AG04450 (cell line): ENCODE measurements at regions of chr18 and their contacts with region 1.

Region 1: GRCh38 chr18:35616074-35616473 is 34.5 kb downstream of the GALNT1 start:
- DNase-seq: no peak
- H3K4me3 ChIP-seq: no peak overlapping the region
- H3K27ac ChIP-seq: no peak overlapping the region
- H3K27me3 ChIP-seq: no peaks in the 10 kb centered on the region
- CTCF ChIP-seq: no peak

Region 2: GRCh38 chr18:35602193-35602820 is 13.8 kb before region 1 on chr18:
- CTCF ChIA-PET with region 1: interaction called, 12 read pairs
- POLR2A ChIA-PET with region 1: no interaction called
- DNase-seq: no peak
- H3K4me3 ChIP-seq: no peak overlapping the region
- H3K27ac ChIP-seq: no peak overlapping the region
- H3K27me3 ChIP-seq: no peaks in the 10 kb centered on the region
- CTCF ChIP-seq: no peak